Posterior cingulate gyrus (tissue), 11 donors: ENCODE measurements at regions of chrX and their contacts with region 1.

Region 1: GRCh38 chrX:71953946-71954345 is 43.3 kb downstream of the NHSL2 start:
- DNase-seq: no peak

Region 2: GRCh38 chrX:71420686-71421085 is 533.3 kb before region 1 on chrX:
- intact Hi-C with region 1: no loop called
- DNase-seq: peak in 1 of 10 donors; percentile 21

Region 3: DNA sequence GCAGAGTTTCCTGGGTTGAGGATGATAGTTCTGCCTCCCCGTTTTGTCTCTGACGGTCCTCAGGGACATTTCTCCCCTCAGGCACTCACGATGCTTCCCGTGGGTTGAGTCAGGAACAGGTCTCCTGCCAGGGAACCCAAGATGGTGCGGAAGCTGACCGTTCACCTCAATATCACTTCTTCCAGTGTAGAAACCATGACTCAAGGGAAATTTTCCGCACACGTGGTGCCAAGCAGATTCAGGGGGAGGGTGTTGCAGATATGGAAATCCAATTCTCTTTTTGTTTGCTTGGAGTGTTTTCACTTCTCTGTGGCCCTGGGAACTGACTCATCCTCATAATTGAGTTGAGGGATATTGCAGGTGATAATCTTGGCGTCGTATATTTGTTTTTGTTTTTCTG is 144.1 kb before region 1 on chrX:
- intact Hi-C with region 1: no loop called
- DNase-seq: no peak

Region 4: DNA sequence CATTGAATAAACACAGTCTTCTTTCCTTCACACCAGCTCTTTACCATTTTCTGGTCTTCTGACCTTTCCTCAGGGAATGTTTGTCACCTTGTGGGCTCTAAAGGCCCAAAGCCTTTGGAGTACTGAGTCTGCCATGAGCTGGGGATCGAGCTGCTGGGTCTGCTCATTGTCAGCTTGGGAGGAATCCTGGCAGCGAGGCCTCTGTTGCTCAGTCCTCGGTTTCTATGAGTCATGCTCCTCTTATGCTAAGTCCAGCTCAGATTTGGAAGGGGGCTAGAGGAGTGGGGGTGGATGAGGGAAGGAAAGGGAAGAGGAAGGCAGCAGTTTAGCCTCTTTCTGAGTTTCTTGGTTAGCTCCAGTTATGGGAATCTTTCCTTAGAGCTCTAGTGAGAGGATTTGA is 12.2 kb before region 1 on chrX:
- intact Hi-C with region 1: loop called (anchors 1 kb)
- DNase-seq: peak in 2 of 10 donors; percentile 8 to 36

Region 5: DNA sequence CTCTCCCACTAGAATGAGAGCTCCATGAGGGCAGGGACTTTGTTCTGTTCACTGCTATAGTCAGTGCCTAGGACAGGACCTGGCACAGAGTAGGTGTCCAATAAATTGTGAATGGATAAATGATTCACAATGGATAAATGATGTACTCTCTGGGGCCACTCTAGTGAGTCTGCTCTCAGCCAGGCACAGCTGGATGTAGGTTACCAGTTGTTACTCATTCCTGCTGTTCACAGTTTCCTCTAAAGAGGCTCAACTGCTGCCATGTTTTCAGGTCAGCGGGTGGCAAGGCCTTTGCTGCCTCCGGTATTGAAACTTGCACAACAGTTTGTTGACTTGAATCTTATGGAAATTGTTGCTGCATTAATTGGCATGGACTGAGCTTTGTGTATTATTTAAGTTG is 55.8 kb after region 1 on chrX:
- intact Hi-C with region 1: no loop called
- DNase-seq: no peak